ENCODE measurements at regions of chr1 and their contacts with region 1.

Region 1: GRCh38 chr1:40404670-40405462 is 31.3 kb downstream of the SMAP2 start:
- DNase-seq: no peak
- ATAC-seq: no peak

Region 2: DNA sequence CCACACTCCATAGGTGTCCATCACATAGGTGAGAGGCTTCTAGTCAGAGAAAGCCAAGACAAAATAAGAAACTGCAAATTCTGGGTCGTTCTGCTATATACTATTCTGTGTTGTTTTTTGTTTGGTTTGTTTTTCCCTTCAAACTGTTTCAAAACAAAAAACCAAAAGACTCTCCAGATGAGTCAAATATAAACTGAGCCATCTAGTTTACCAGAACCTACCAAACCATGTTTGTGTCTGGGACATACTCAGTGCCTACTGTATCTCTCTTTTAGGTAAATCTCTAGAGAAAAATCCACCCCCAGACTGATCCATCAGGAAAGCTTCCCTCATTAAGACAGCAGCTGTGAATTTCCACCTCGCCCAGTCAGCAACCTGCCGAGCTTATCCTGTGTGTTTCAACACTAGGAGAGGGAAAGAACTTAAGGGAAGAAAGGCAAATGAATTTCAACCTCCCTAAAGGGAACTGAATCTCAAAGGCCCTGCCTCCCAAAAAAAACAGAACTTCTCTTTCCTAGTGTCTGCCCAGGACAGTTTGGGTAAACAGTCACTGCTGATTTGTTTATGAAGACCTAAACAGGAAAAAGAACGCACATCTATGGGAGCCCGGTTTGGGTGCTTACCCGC is 325.0 kb before region 1 on chr1:
- intact Hi-C with region 1: loop called (anchors 10 kb)
- DNase-seq: no peak
- ATAC-seq: no peak

Region 3: GRCh38 chr1:40096977-40097782 is 307.7 kb before region 1 on chr1 and contains the start of gene PPT1:
- intact Hi-C with region 1: no loop called
- DNase-seq: peak; percentile 94
- ATAC-seq: peak; percentile 93
- total RNA-seq, gene PPT1: 44.1 TPM

Region 4: GRCh38 chr1:40143891-40144575 is 260.8 kb before region 1 on chr1:
- intact Hi-C with region 1: loop called (anchors 2 kb)
- DNase-seq: no peak
- ATAC-seq: peak; percentile 63

Region 5: GRCh38 chr1:40338745-40339424 is 66.0 kb before region 1 on chr1:
- intact Hi-C with region 1: loop called (anchors 5 kb)
- DNase-seq: peak; percentile 86
- ATAC-seq: peak; percentile 77

Measured in Right ventricle myocardium inferior (tissue), 1 donor.